Activated CD4-positive, alpha-beta memory T cell treated with anti-CD3 and anti-CD28 coated beads for 36 hours (primary cell): ENCODE measurements at regions of chr20 and their contacts with region 1.

Region 1: DNA sequence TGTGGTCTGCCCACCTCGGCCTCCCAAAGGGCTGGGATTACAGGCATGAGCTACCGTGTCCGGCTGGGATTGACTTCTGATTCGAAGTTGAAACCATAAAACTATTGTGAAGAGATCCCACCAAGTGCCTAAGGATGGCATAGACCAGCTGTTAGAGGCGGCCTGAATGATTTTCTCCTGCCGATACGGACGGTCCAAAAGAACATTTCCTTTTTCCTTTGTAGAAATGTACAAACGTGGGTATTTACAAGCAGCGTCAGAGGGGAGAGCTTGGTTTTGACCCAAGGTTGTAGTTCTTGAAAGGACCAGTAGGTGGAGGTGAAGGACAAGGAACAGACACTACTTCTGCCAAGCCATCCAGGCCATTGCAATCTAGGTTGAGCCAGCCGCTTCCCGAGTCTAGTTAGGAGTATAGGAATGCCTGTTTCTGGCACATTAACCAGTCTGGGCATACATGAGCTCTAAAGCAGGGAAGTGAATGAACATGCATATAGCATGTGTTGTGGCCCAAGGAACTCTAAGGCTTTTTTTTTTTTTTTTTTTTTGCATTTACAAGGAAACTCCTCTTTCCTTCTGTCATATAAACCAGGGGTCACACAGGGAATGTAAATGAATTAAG is 29.1 kb downstream of the MOCS3 start:
- DNase-seq: peak; percentile 59
- H3K4me3 Mint-ChIP-seq: no peak overlapping the region
- H3K27ac Mint-ChIP-seq: no peak overlapping the region
- H3K4me1 Mint-ChIP-seq: no peaks in the 10 kb centered on the region
- H3K27me3 Mint-ChIP-seq: peaks cover 22% of the 10 kb centered on the region

Region 2: GRCh38 chr20:51001758-51002157 is 14.1 kb after region 1 on chr20:
- CTCF ChIA-PET with region 1: interaction called, 12 read pairs
- POLR2A ChIA-PET with region 1: no interaction called
- intact Hi-C with region 1: no loop called
- DNase-seq: no peak
- H3K4me3 Mint-ChIP-seq: no peak overlapping the region
- H3K27ac Mint-ChIP-seq: no peak overlapping the region
- H3K4me1 Mint-ChIP-seq: no peaks in the 10 kb centered on the region
- H3K27me3 Mint-ChIP-seq: peaks cover 26% of the 10 kb centered on the region

Region 3: GRCh38 chr20:51128198-51128597 is 140.5 kb after region 1 on chr20:
- CTCF ChIA-PET with region 1: interaction called, 3 read pairs
- POLR2A ChIA-PET with region 1: no interaction called
- intact Hi-C with region 1: loop called (anchors 10 kb)
- DNase-seq: peak; percentile 60
- H3K4me3 Mint-ChIP-seq: no peak overlapping the region
- H3K27ac Mint-ChIP-seq: peak overlapping the region; percentile 36
- H3K4me1 Mint-ChIP-seq: peaks cover 21% of the 10 kb centered on the region
- H3K27me3 Mint-ChIP-seq: peaks cover 12% of the 10 kb centered on the region

Region 4: DNA sequence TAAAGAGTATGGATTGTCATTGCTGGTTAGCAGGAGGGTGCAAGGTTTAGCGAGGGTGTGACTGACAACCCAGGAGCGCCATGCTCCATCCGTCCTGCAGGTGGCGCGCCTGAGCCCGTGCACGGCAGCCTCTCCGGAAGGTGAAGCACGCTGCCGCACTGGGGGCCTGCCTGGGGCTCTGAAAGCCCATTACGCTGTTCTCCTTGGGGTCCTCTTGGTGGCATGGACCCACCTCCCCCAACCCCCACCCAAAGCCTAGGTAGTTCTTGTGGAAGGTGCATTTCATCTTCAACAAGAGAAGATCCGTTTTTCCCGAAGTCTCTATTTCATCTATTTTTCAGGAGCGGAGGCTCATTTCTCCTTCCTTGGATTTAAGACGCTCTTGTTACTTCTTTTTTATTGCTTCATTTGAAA is 232.6 kb after region 1 on chr20:
- CTCF ChIA-PET with region 1: interaction called, 4 read pairs
- POLR2A ChIA-PET with region 1: no interaction called
- intact Hi-C with region 1: loop called (anchors 10 kb)
- DNase-seq: peak; percentile 74
- H3K4me3 Mint-ChIP-seq: no peak overlapping the region
- H3K27ac Mint-ChIP-seq: no peak overlapping the region
- H3K4me1 Mint-ChIP-seq: peaks cover 12% of the 10 kb centered on the region
- H3K27me3 Mint-ChIP-seq: peaks cover 44% of the 10 kb centered on the region

Region 5: DNA sequence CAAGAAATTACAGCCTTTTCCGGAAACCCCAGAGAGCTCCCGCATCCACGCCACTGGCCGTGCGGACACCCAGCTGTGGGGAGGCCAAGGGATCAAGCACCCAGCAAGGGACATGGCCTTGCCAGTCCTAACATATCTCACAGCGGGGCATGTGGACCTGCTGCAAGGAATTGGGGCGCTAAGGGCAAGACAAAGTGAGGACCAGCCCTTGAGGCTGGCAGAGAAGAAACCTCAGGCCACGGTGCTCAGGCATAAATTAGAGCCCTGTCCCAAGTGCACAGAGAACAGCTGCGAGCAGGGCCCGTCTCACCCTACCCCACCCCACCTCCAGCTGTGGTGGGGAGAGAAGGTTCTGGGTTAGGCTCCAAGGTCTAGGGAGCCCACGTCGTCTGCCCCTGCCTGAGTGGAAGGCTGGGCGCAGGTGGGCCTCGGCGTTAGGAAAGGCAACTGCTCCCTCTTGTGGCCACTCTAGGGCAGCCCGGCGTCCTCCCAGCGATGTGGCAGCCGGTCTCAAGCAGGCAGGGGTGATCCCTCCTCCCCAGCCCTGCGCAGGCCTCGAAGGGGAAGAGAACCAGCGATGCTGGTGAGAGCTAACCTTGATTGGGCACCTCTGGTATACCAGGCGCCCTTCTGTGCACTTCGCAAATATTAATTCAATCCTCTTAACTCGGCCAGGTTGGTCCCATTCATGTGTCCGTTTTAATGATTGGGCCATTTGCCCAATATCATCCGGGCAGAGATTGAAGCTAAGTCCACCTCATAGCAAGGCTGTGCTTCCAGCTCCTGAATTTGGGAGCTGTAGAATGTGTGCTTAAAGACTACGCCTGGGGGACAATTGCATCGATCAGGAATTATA is 319.0 kb after region 1 on chr20:
- CTCF ChIA-PET with region 1: interaction called, 397 read pairs
- POLR2A ChIA-PET with region 1: interaction called, 3 read pairs
- intact Hi-C with region 1: no loop called
- DNase-seq: peak; percentile 81
- H3K4me3 Mint-ChIP-seq: no peak overlapping the region
- H3K27ac Mint-ChIP-seq: no peak overlapping the region
- H3K4me1 Mint-ChIP-seq: no peaks in the 10 kb centered on the region
- H3K27me3 Mint-ChIP-seq: peaks cover 6% of the 10 kb centered on the region

Region 6: GRCh38 chr20:51318058-51318895 is 330.6 kb after region 1 on chr20:
- CTCF ChIA-PET with region 1: interaction called, 80 read pairs
- POLR2A ChIA-PET with region 1: no interaction called
- intact Hi-C with region 1: loop called (anchors 5 kb)
- DNase-seq: peak; percentile 76
- H3K4me3 Mint-ChIP-seq: no peak overlapping the region
- H3K27ac Mint-ChIP-seq: no peak overlapping the region
- H3K4me1 Mint-ChIP-seq: peaks cover 2% of the 10 kb centered on the region
- H3K27me3 Mint-ChIP-seq: no peaks in the 10 kb centered on the region

Region 7: GRCh38 chr20:51326201-51326819 is 338.6 kb after region 1 on chr20:
- CTCF ChIA-PET with region 1: interaction called, 80 read pairs
- POLR2A ChIA-PET with region 1: no interaction called
- intact Hi-C with region 1: loop called (anchors 5 kb)
- DNase-seq: peak; percentile 51
- H3K4me3 Mint-ChIP-seq: no peak overlapping the region
- H3K27ac Mint-ChIP-seq: no peak overlapping the region
- H3K4me1 Mint-ChIP-seq: no peaks in the 10 kb centered on the region
- H3K27me3 Mint-ChIP-seq: peaks cover 2% of the 10 kb centered on the region